MCF 10A (cell line): ENCODE measurements at regions of chr1 and their contacts with region 1.

Region 1: DNA sequence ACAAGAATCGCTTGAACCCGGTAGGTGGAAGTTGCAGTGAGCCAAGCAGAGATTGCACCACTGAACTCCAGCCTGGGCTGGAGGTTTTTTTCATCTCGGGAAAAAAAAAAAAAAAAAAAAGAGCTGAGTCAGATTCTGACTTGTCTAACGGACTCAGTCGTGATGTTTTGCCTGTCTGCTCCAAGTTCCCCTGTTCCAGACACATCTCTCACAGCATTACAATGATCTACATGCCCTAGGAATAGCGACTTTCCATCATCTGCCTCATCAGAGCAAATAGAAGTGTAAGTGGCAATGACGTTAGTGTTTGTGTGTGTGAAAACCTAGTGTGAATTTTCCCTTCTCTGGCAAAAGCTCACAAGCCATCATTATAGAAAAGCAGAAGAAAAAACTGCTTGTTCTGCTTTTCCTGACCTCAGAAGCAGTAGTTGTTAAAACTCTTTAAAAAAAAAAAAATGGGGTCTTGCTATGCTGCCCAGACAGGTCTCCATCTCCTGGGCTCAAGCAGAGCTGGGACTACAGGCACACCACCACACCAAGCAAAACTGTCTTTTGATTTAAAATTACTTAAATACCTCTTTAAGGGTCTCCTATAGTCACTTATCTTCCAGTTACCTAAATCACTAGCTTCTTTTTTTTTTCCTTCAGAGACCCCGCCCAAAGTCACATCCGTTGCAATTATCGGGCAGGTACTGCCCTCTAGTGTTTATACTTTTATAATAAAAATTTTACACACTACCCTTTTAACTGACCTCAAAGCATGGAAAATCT is 37.3 kb downstream of the PLEKHO1 start:
- DNase-seq: peak; percentile 74
- H3K4me3 Mint-ChIP-seq: no peak overlapping the region
- H3K27ac Mint-ChIP-seq: no peak overlapping the region
- H3K4me1 Mint-ChIP-seq: peaks cover 9% of the 10 kb centered on the region
- H3K27me3 Mint-ChIP-seq: no peaks in the 10 kb centered on the region
- CTCF ChIP-seq: peak; percentile 67

Region 2: DNA sequence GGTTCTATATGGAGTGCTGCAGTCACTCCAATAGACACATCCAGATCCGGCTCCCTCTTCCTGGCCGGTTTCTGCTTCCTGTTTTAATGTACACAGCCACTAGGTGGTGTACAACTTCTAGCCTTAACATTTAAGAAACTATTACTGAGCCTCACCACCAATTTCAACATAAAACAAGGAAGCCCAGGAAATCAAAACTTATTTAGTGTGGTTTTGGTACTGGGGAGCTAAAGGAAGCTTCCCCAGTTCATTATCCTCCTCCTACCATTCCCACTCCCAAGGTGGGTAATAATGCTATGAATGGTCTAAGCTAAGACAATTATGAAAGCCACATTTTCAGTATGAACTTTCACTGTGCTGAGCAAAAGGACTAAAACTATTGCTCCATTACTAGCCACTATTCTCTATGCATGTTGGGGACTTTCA is 224.8 kb before region 1 on chr1:
- CTCF ChIA-PET with region 1: interaction called, 48 read pairs
- POLR2A ChIA-PET with region 1: interaction called, 3 read pairs
- intact Hi-C with region 1: loop called (anchors 1 kb)
- DNase-seq: peak; percentile 85
- H3K4me3 Mint-ChIP-seq: no peak overlapping the region
- H3K27ac Mint-ChIP-seq: peak overlapping the region; percentile 33
- H3K4me1 Mint-ChIP-seq: peaks cover 22% of the 10 kb centered on the region
- H3K27me3 Mint-ChIP-seq: no peaks in the 10 kb centered on the region
- CTCF ChIP-seq: peak; percentile 88

Region 3: GRCh38 chr1:150067184-150068036 is 119.6 kb before region 1 on chr1 and contains the start of gene VPS45:
- CTCF ChIA-PET with region 1: interaction called, 159 read pairs
- POLR2A ChIA-PET with region 1: interaction called, 43 read pairs
- intact Hi-C with region 1: no loop called
- DNase-seq: peak; percentile 95
- H3K4me3 Mint-ChIP-seq: peak within 1 kb of the TSS; percentile 91
- H3K27ac Mint-ChIP-seq: peak within 1 kb of the TSS; percentile 87
- H3K4me1 Mint-ChIP-seq: peaks cover 33% of the 10 kb centered on the region
- H3K27me3 Mint-ChIP-seq: no peaks in the 10 kb centered on the region
- CTCF ChIP-seq: no peak
- total RNA-seq, gene VPS45: 35.1 and 55.1 TPM in 2 replicates

Region 4: GRCh38 chr1:150151291-150152181 is 35.4 kb before region 1 on chr1:
- CTCF ChIA-PET with region 1: interaction called, 22 read pairs
- POLR2A ChIA-PET with region 1: interaction called, 5 read pairs
- intact Hi-C with region 1: no loop called
- DNase-seq: no peak
- H3K4me3 Mint-ChIP-seq: peak overlapping the region; percentile 56
- H3K27ac Mint-ChIP-seq: peak overlapping the region; percentile 2
- H3K4me1 Mint-ChIP-seq: peaks cover 6% of the 10 kb centered on the region
- H3K27me3 Mint-ChIP-seq: no peaks in the 10 kb centered on the region
- CTCF ChIP-seq: no peak

Region 5: DNA sequence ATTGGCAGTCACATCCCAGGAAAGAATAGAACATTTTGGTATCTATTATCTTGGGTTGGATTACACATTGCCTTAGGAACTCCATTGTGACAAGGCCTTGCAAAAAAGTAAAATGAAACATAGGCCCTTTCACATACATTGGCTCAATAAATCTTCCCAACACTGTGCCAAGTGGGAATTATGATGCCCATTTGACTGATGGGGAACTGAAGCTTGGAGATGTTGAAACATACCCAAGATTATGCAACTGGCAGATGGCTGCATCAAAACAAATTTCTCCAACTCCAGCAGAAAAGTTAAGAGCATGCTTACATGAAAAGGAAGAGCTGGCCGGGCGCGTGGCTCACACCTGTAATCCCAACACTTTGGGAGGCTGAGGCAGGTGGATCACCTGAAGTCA is 10.4 kb before region 1 on chr1:
- CTCF ChIA-PET with region 1: interaction called, 223 read pairs
- POLR2A ChIA-PET with region 1: interaction called, 3 read pairs
- intact Hi-C with region 1: no loop called
- DNase-seq: peak; percentile 66
- H3K4me3 Mint-ChIP-seq: no peak overlapping the region
- H3K27ac Mint-ChIP-seq: no peak overlapping the region
- H3K4me1 Mint-ChIP-seq: no peaks in the 10 kb centered on the region
- H3K27me3 Mint-ChIP-seq: no peaks in the 10 kb centered on the region
- CTCF ChIP-seq: no peak

Region 6: DNA sequence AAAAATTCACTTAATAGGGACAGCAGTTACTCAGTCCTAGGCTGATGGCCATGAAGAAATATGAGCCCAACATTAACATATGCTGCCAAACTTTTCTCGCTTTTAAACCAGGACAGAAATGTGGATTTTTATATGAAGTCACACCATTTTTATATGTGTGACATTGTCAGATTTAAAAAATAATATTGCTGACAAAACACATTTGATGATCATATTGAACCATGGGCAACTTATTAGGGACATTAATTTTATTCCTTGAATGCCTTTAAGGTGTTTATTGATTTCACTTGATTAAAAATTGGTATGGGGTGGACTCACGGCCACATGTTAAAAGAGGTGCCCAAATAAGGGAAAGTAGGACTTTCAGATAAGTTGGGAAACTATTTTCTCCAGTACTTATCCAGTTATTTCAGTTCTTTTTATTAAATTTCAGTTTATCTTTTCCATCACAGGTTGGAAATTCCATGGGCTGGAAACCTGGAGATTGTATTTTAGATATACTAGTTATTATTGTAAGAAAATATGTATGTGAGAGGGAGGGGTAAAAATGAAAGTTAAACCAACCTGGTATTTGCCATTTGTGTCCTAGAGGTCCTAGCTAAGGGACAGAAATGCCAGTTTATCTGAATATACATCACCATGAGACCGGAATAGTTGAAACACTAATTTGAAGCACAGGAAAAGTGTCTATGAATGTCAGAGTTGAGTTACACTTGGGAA is 235.7 kb after region 1 on chr1:
- CTCF ChIA-PET with region 1: interaction called, 10 read pairs
- POLR2A ChIA-PET with region 1: no interaction called
- intact Hi-C with region 1: no loop called
- DNase-seq: no peak
- H3K4me3 Mint-ChIP-seq: no peak overlapping the region
- H3K27ac Mint-ChIP-seq: no peak overlapping the region
- H3K4me1 Mint-ChIP-seq: peaks cover 10% of the 10 kb centered on the region
- H3K27me3 Mint-ChIP-seq: no peaks in the 10 kb centered on the region
- CTCF ChIP-seq: no peak